ENCODE measurements at regions of chr3 and their contacts with region 1.

Region 1: GRCh38 chr3:18559331-18559842 is 134.2 kb upstream of the SATB1 start:
- DNase-seq: peak; percentile 47
- H3K4me3 Mint-ChIP-seq: peak overlapping the region; percentile 39
- H3K27ac Mint-ChIP-seq: peak overlapping the region; percentile 88
- H3K4me1 Mint-ChIP-seq: peaks cover 66% of the 10 kb centered on the region
- H3K27me3 Mint-ChIP-seq: no peaks in the 10 kb centered on the region

Region 2: GRCh38 chr3:18424729-18425640 is 134.4 kb before region 1 on chr3 and contains the start of gene SATB1:
- CTCF ChIA-PET with region 1: no interaction called
- intact Hi-C with region 1: loop called (anchors 1 kb)
- DNase-seq: peak; percentile 84
- H3K4me3 Mint-ChIP-seq: peak within 1 kb of the TSS; percentile 86
- H3K27ac Mint-ChIP-seq: peak within 1 kb of the TSS; percentile 98
- H3K4me1 Mint-ChIP-seq: peaks cover 73% of the 10 kb centered on the region
- H3K27me3 Mint-ChIP-seq: no peaks in the 10 kb centered on the region
- total RNA-seq, gene SATB1: 303 to 305 TPM

Region 3: DNA sequence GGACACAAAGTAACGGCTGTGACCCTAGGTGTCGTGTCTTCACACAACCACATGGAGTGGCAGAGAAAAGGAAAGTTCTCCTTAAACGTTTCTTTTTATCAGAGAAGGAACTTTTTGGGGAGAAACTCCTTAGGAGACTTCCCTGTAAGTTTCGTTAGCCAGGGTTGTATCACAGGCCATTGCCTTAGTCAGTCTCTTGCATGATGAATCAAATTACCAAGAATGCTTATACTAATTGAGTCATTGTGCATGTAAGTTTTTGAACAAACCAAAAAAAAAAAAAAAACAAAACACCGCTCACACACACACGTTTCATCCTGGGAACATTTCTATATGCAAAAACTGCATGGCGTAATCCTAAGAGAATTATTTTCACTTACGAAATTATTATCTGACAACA is 16.2 kb after region 1 on chr3:
- CTCF ChIA-PET with region 1: interaction called, 14 read pairs
- intact Hi-C with region 1: loop called (anchors 1 kb)
- DNase-seq: no peak
- H3K4me3 Mint-ChIP-seq: no peak overlapping the region
- H3K27ac Mint-ChIP-seq: no peak overlapping the region
- H3K4me1 Mint-ChIP-seq: peaks cover 21% of the 10 kb centered on the region
- H3K27me3 Mint-ChIP-seq: no peaks in the 10 kb centered on the region

Region 4: GRCh38 chr3:18717598-18717997 is 158.2 kb after region 1 on chr3:
- CTCF ChIA-PET with region 1: interaction called, 9 read pairs
- intact Hi-C with region 1: loop called (anchors 1 kb)
- DNase-seq: no peak
- H3K4me3 Mint-ChIP-seq: no peak overlapping the region
- H3K27ac Mint-ChIP-seq: peak overlapping the region; percentile 84
- H3K4me1 Mint-ChIP-seq: peaks cover 71% of the 10 kb centered on the region
- H3K27me3 Mint-ChIP-seq: no peaks in the 10 kb centered on the region

Region 5: GRCh38 chr3:20054549-20054987 is 1495.2 kb after region 1 on chr3:
- CTCF ChIA-PET with region 1: no interaction called
- intact Hi-C with region 1: loop called (anchors 2 kb)
- DNase-seq: peak; percentile 84
- H3K4me3 Mint-ChIP-seq: no peak overlapping the region
- H3K27ac Mint-ChIP-seq: no peak overlapping the region
- H3K4me1 Mint-ChIP-seq: peaks cover 23% of the 10 kb centered on the region
- H3K27me3 Mint-ChIP-seq: no peaks in the 10 kb centered on the region

Measured in activated naive CD4-positive, alpha-beta T cell treated with anti-CD3 and anti-CD28 coated beads for 36 hours (primary cell).